Ascending aorta (tissue), 2 donors: ENCODE measurements at regions of chr2 and their contacts with region 1.

Region 1: DNA sequence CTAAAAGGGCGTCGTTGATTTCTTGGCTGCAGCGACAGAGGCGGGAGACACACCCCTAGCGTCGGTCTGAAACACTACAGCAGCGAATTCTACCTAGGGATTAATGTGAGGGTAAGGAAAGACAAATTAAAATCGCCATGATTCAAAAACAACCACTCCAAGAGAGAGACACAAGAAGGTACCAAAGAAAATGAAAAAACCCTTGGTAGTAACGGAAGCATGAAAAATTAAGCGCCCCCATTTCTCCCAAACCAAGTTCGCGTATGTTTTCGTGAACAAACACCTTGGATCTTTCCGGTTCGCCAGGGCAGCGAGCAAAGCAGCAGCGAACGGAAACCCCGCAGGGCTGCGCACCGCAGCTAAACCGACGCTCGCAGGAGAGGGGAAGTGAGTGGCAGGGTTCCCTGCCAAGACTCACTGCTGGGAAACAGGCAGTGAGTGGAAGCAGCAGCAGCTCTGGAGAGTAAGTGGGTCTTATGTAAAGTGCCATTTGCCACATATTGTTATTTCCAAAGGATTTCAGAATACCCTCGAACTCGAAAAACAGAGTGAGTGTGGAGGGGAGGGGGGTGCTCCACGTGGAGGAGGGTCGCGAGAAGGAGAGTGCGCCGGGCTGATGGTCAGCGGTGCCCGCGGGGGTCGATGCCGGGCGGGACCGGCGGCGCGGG is 1.0 kb downstream of the PPP3R1 start:
- DNase-seq: peak in 1 of 2 donors; percentile 80
- H3K4me3 ChIP-seq: peak overlapping the region; percentile 91 to 99
- H3K27ac ChIP-seq: peak overlapping the region; percentile 97 to 100
- H3K4me1 ChIP-seq: peaks cover 3 to 44% of the 10 kb centered on the region in 2 donors
- H3K27me3 ChIP-seq: no peaks in the 10 kb centered on the region
- CTCF ChIP-seq: peak; percentile 32 to 76 (median 66)

Region 2: GRCh38 chr2:68062680-68063387 is 188.5 kb before region 1 on chr2 and contains the start of gene C1D:
- intact Hi-C with region 1: loop called (anchors 2 kb)
- DNase-seq: peak; percentile 62 to 97
- H3K4me3 ChIP-seq: peak within 1 kb of the TSS; percentile 64 to 80
- H3K27ac ChIP-seq: peak within 1 kb of the TSS; percentile 78 to 83
- H3K4me1 ChIP-seq: peaks cover 2 to 12% of the 10 kb centered on the region in 2 donors
- H3K27me3 ChIP-seq: no peaks in the 10 kb centered on the region
- CTCF ChIP-seq: no peak
- total RNA-seq, gene C1D: not detected

Region 3: GRCh38 chr2:68196120-68196716 is 55.1 kb before region 1 on chr2:
- intact Hi-C with region 1: loop called (anchors 1 kb)
- DNase-seq: no peak
- H3K4me3 ChIP-seq: no peak overlapping the region
- H3K27ac ChIP-seq: no peak overlapping the region
- H3K4me1 ChIP-seq: peaks cover 0 to 25% of the 10 kb centered on the region in 2 donors
- H3K27me3 ChIP-seq: no peaks in the 10 kb centered on the region
- CTCF ChIP-seq: peak; percentile 53 to 74 (median 58)

Region 4: GRCh38 chr2:68434981-68435380 is 183.7 kb after region 1 on chr2:
- intact Hi-C with region 1: loop called (anchors 5 kb)
- DNase-seq: no peak
- H3K4me3 ChIP-seq: no peak overlapping the region
- H3K27ac ChIP-seq: peak overlapping the region in 1 of 2 donors; percentile 80
- H3K4me1 ChIP-seq: peaks cover 0 to 9% of the 10 kb centered on the region in 2 donors
- H3K27me3 ChIP-seq: no peaks in the 10 kb centered on the region
- CTCF ChIP-seq: no peak

Region 5: DNA sequence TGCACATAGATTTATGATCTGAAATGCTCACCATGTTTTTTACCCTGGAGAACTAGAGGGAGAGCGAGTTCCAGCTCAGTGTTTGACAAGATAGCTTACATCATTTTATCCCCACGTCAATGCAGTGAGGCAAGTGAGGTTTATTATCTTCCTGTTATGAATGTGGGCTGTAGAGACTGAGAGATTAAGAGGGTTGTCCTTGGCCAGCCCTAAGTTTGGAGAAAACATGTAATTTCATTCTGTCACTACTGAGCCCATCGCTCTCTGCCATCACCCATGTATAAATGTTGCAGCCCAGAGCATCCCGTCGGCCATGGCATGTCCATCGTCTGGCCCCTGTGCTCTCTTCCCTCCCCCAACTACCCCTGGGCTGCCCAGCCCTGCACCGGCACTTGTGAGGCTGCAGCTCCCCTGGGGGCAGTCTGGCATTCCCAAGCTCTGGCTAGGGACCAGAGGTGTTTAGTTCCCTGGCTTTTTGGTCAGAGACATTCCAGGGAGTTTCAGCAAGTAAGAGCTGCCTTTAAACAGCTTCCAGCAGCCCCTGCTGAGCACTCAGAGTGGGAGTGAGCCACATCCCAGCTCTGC is 898.4 kb after region 1 on chr2:
- intact Hi-C with region 1: loop called (anchors 10 kb)
- DNase-seq: peak in 1 of 2 donors; percentile 86
- H3K4me3 ChIP-seq: no peak overlapping the region
- H3K27ac ChIP-seq: peak overlapping the region; percentile 77 to 86
- H3K4me1 ChIP-seq: peaks cover 24 to 53% of the 10 kb centered on the region in 2 donors
- H3K27me3 ChIP-seq: no peaks in the 10 kb centered on the region
- CTCF ChIP-seq: no peak